ENCODE measurements at regions of chr1 and their contacts with region 1.

Region 1: GRCh38 chr1:200558866-200559459 is 61.6 kb downstream of the KIF14 start:
- DNase-seq: peak; percentile 29
- ATAC-seq: peak; percentile 67
- H3K4me3 ChIP-seq: no peak overlapping the region
- H3K27ac ChIP-seq: no peak overlapping the region
- H3K4me1 ChIP-seq: no peaks in the 10 kb centered on the region
- H3K27me3 ChIP-seq: no peaks in the 10 kb centered on the region
- CTCF ChIP-seq: peak; percentile 66
- EP300 ChIP-seq: no peak
- POLR2A ChIP-seq: no peak
- RAD21 ChIP-seq: peak; percentile 41

Region 2: GRCh38 chr1:200837931-200838571 is 279.1 kb after region 1 on chr1:
- CTCF ChIA-PET with region 1: interaction called, 5 read pairs
- POLR2A ChIA-PET with region 1: no interaction called
- in situ Hi-C with region 1: no loop called
- intact Hi-C with region 1: loop called (anchors 1 kb)
- DNase-seq: no peak
- ATAC-seq: no peak
- H3K4me3 ChIP-seq: no peak overlapping the region
- H3K27ac ChIP-seq: no peak overlapping the region
- H3K4me1 ChIP-seq: no peaks in the 10 kb centered on the region
- H3K27me3 ChIP-seq: no peaks in the 10 kb centered on the region
- CTCF ChIP-seq: no peak
- EP300 ChIP-seq: no peak
- POLR2A ChIP-seq: no peak
- RAD21 ChIP-seq: no peak

Measured in HepG2 (cell line).